B cell (primary cell): ENCODE measurements at regions of chr1 and their contacts with region 1.

Region 1: GRCh38 chr1:113042285-113043143 is 30.5 kb upstream of the LRIG2 start:
- DNase-seq: peak; percentile 65
- ATAC-seq: peak; percentile 73
- H3K4me3 ChIP-seq: no peak overlapping the region
- H3K4me3 Mint-ChIP-seq: no peak overlapping the region
- H3K27ac ChIP-seq: no peak overlapping the region
- H3K27ac Mint-ChIP-seq: no peak overlapping the region
- H3K4me1 ChIP-seq: peaks cover 5 to 12% of the 10 kb centered on the region in 2 donors
- H3K4me1 Mint-ChIP-seq: peaks cover 11% of the 10 kb centered on the region
- H3K27me3 ChIP-seq: peaks cover 0 to 3% (median 0%) of the 10 kb centered on the region in 4 experiments
- H3K27me3 Mint-ChIP-seq: peaks cover 3% of the 10 kb centered on the region
- CTCF ChIP-seq: peak; percentile 32

Region 2: GRCh38 chr1:112735752-112736151 is 306.8 kb before region 1 on chr1:
- CTCF ChIA-PET with region 1: no interaction called
- POLR2A ChIA-PET with region 1: no interaction called
- intact Hi-C with region 1: no loop called
- DNase-seq: no peak
- ATAC-seq: no peak
- H3K4me3 ChIP-seq: no peak overlapping the region
- H3K4me3 Mint-ChIP-seq: no peak overlapping the region
- H3K27ac ChIP-seq: no peak overlapping the region
- H3K27ac Mint-ChIP-seq: no peak overlapping the region
- H3K4me1 ChIP-seq: peaks cover 4 to 5% of the 10 kb centered on the region in 2 donors
- H3K4me1 Mint-ChIP-seq: peaks cover 8% of the 10 kb centered on the region
- H3K27me3 ChIP-seq: peaks cover 0 to 14% (median 2%) of the 10 kb centered on the region in 4 experiments
- H3K27me3 Mint-ChIP-seq: peaks cover 36% of the 10 kb centered on the region
- CTCF ChIP-seq: no peak

Region 3: GRCh38 chr1:112809253-112809684 is 233.2 kb before region 1 on chr1:
- CTCF ChIA-PET with region 1: interaction called, 15 read pairs
- POLR2A ChIA-PET with region 1: no interaction called
- intact Hi-C with region 1: loop called (anchors 1 kb)
- DNase-seq: peak; percentile 63
- ATAC-seq: peak; percentile 56
- H3K4me3 ChIP-seq: no peak overlapping the region
- H3K4me3 Mint-ChIP-seq: no peak overlapping the region
- H3K27ac ChIP-seq: no peak overlapping the region
- H3K27ac Mint-ChIP-seq: no peak overlapping the region
- H3K4me1 ChIP-seq: no peaks in the 10 kb centered on the region
- H3K4me1 Mint-ChIP-seq: no peaks in the 10 kb centered on the region
- H3K27me3 ChIP-seq: no peaks in the 10 kb centered on the region
- H3K27me3 Mint-ChIP-seq: peaks cover 27% of the 10 kb centered on the region
- CTCF ChIP-seq: peak; percentile 81

Region 4: GRCh38 chr1:112882271-112882744 is 160.2 kb before region 1 on chr1:
- CTCF ChIA-PET with region 1: interaction called, 83 read pairs
- POLR2A ChIA-PET with region 1: interaction called, 8 read pairs
- intact Hi-C with region 1: no loop called
- DNase-seq: no peak
- ATAC-seq: no peak
- H3K4me3 ChIP-seq: no peak overlapping the region
- H3K4me3 Mint-ChIP-seq: no peak overlapping the region
- H3K27ac ChIP-seq: no peak overlapping the region
- H3K27ac Mint-ChIP-seq: no peak overlapping the region
- H3K4me1 ChIP-seq: no peaks in the 10 kb centered on the region
- H3K4me1 Mint-ChIP-seq: no peaks in the 10 kb centered on the region
- H3K27me3 ChIP-seq: peaks cover 0 to 5% (median 0%) of the 10 kb centered on the region in 4 experiments
- H3K27me3 Mint-ChIP-seq: peaks cover 7% of the 10 kb centered on the region
- CTCF ChIP-seq: no peak